Activated CD4-positive, alpha-beta memory T cell treated with anti-CD3 and anti-CD28 coated beads, Interleukin-2, amount 10 ng/mL, durations not matched to agents 7 days and 5 days (primary cell): ENCODE measurements at regions of chr2 and their contacts with region 1.

Region 1: GRCh38 chr2:84314901-84315330 is 144.2 kb downstream of the SUCLG1 start:
- DNase-seq: peak; percentile 77
- H3K4me3 Mint-ChIP-seq: no peak overlapping the region
- H3K27ac Mint-ChIP-seq: no peak overlapping the region
- H3K4me1 Mint-ChIP-seq: no peaks in the 10 kb centered on the region
- H3K27me3 Mint-ChIP-seq: no peaks in the 10 kb centered on the region

Region 2: DNA sequence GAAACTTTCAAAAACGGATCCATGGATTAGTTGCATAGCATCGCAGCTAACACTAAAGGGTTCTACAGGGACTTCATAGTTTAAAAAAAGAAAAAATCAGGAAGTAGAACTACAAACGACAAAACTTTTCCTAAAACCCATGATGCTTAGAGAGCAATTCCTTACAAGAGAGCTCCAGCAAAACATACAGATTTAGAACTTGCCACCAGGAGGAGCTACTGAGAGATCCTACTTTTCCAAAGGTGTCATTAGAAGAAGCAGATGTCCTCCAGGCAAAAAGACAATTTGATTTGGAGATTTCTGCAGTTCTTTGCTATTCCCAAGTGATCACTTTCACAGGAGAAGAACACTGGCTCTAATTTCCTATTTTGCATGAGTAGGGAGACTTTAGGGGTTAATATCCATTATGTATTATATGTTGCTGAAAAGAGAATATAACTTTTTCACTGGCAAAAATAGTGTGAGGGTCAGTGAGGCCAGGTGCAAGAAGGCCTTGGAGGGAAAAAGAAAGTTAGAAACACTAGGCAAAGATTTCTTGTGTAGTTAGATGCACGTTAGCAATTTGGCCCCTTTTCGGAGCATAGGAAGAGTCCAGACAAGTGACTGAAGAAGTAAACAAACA is 292.0 kb before region 1 on chr2:
- CTCF ChIA-PET with region 1: interaction called, 13 read pairs
- POLR2A ChIA-PET with region 1: no interaction called
- DNase-seq: no peak
- H3K4me3 Mint-ChIP-seq: no peak overlapping the region
- H3K27ac Mint-ChIP-seq: no peak overlapping the region
- H3K4me1 Mint-ChIP-seq: no peaks in the 10 kb centered on the region
- H3K27me3 Mint-ChIP-seq: peaks cover 1% of the 10 kb centered on the region

Region 3: GRCh38 chr2:84038866-84039265 is 276.1 kb before region 1 on chr2:
- CTCF ChIA-PET with region 1: no interaction called
- POLR2A ChIA-PET with region 1: no interaction called
- DNase-seq: no peak
- H3K4me3 Mint-ChIP-seq: no peak overlapping the region
- H3K27ac Mint-ChIP-seq: no peak overlapping the region
- H3K4me1 Mint-ChIP-seq: peaks cover 1% of the 10 kb centered on the region
- H3K27me3 Mint-ChIP-seq: peaks cover 9% of the 10 kb centered on the region

Region 4: DNA sequence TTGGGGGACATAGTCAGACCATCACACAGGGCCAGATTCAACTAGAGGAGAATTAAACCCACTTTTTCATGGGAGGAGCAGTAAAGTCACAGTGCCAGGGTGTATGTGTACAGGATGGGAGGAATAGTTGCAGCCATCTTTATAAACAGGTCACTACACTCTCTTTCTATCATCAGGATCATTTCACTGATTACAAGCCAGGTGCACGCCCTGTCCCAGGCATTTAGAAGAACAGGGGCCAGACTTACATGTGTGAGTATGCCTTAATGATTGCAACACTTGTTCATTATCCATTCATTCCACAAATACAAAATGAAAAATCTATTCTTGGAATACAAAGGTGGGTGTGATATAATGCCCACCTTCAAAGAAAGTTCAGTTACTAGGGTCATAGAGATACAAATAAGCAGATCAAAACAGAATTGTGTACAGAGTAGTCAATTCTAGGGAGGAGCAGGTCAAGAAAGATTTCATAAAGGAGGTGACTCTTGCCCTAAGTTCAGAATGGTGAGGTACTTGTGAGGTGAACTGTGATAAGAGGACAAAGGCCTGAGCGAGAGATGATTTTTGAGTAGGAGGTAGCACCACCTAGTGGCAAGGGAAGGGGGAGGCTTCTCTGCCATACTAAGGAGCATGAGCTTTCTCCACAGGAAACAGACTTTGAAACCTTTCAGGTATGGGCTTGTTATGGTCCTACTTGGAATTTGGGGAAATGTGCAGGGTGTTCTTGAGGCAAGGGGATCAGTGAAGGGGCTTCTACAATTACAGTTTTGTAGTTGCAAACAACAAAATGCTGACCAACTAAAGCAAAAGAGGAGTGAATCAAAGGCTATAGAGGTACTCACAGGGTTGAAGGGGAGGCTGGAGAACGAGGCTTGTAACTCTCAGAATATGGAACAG is 12.2 kb before region 1 on chr2:
- CTCF ChIA-PET with region 1: interaction called, 12 read pairs
- POLR2A ChIA-PET with region 1: no interaction called
- DNase-seq: peak; percentile 48
- H3K4me3 Mint-ChIP-seq: no peak overlapping the region
- H3K27ac Mint-ChIP-seq: no peak overlapping the region
- H3K4me1 Mint-ChIP-seq: no peaks in the 10 kb centered on the region
- H3K27me3 Mint-ChIP-seq: peaks cover 8% of the 10 kb centered on the region

Region 5: GRCh38 chr2:84516234-84516986 is 201.5 kb after region 1 on chr2 and contains the start of gene DNAH6:
- CTCF ChIA-PET with region 1: no interaction called
- POLR2A ChIA-PET with region 1: no interaction called
- DNase-seq: peak; percentile 89
- H3K4me3 Mint-ChIP-seq: peak within 1 kb of the TSS; percentile 74
- H3K27ac Mint-ChIP-seq: no peak within 1 kb of the TSS
- H3K4me1 Mint-ChIP-seq: peaks cover 23% of the 10 kb centered on the region
- H3K27me3 Mint-ChIP-seq: peaks cover 26% of the 10 kb centered on the region
- total RNA-seq, gene DNAH6: 0.45 to 0.50 TPM